ENCODE measurements at regions of chr14 and their contacts with region 1.

Region 1: DNA sequence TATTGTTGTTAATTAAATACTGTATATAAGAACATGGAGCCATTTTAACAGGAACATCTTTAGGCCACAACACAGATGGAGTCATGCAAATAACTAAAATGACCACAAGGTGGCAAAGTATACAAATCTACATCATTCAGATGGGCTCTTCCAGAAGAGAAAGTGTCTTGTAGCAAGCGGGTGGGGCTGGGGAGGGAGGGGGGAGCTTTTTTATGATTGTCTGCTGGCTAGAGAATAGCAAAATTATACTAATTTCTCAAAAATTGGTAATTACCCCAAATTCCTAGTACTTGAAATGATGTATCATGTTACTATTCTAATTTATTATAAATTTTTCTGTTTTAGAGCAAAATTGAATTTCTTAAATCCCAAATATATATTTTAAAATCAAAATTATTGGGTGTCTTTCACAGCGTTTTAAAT is 378.7 kb downstream of the PRKD1 start:
- DNase-seq: peak in 2 of 4 donors; percentile 23 to 46
- ATAC-seq: peak; percentile 85
- H3K4me3 ChIP-seq: no peak overlapping the region
- H3K27ac ChIP-seq: no peak overlapping the region
- H3K4me1 ChIP-seq: no peaks in the 10 kb centered on the region
- H3K27me3 ChIP-seq: no peaks in the 10 kb centered on the region
- CTCF ChIP-seq: peak; percentile 44 to 49

Region 2: DNA sequence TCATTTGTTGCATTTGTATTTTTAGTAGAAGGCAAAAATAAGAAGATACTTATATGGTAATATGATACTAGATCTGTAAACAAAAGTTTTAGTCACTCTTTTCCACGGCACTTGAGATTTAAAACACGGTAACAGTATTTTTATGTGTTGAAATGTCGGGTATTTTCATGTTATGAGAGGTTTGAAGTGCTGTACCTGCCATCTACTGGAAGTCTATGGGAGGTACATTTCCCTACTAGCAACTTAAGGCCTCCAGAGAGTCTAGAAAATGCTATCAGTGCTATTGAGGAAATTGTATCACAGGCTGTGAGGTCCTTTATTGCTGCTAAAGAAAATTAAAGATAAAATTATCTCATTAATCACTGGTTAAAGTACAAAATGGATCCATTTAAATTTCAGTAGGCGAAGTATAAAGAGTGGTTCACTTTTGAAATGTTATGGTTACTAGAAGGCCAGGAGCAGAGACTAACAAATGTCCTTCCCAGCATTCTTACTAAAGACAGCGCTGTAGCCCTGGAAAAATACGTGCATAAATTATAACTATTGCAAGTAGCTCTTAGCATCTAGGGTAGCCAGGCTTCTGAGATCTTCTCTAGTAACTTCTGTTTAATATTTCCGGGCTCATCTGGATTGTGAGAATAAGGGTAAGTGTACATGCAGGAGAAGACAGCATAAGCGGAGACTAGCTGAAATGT is 456.3 kb after region 1 on chr14:
- intact Hi-C with region 1: loop called in 1 of 2 experiments (anchors 5 kb)
- DNase-seq: peak in 2 of 4 donors; percentile 31 to 60
- ATAC-seq: peak; percentile 90
- H3K4me3 ChIP-seq: no peak overlapping the region
- H3K27ac ChIP-seq: no peak overlapping the region
- H3K4me1 ChIP-seq: no peaks in the 10 kb centered on the region
- H3K27me3 ChIP-seq: no peaks in the 10 kb centered on the region
- CTCF ChIP-seq: peak; percentile 57 to 58

Region 3: GRCh38 chr14:30214461-30215090 is 665.6 kb after region 1 on chr14:
- intact Hi-C with region 1: loop called in 1 of 2 experiments (anchors 10 kb)
- DNase-seq: peak in 2 of 4 donors; percentile 29 to 55
- ATAC-seq: peak; percentile 79
- H3K4me3 ChIP-seq: no peak overlapping the region
- H3K27ac ChIP-seq: no peak overlapping the region
- H3K4me1 ChIP-seq: no peaks in the 10 kb centered on the region
- H3K27me3 ChIP-seq: no peaks in the 10 kb centered on the region
- CTCF ChIP-seq: peak; percentile 27 to 56

Measured in left lung (tissue), 14 donors.